GM12878 (cell line): ENCODE measurements at regions of chr1 and their contacts with region 1.

Region 1: DNA sequence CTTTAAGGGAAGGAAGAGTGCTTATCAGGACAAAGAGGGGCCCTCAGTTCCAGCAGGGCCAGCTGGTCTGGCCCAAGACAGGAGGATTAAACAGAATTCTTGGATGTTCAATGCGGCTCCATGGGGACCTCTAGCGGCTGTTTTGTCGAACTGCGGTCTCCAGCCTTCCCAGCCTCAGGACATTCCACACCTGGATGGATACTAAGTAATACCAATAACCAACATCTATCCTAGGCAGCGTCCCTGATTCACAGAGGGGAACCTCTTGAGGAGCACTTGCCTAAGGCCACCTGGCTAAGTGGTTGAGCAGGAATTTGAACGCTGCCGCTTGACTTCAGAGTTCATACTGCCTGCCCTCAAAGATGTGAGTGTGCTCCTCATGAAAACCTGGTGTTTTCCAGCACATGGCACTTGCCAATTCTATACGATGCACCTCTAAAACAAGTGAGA is 15.5 kb upstream of the CD247 start:
- DNase-seq: no peak
- ATAC-seq: peak; percentile 90
- H3K4me3 ChIP-seq: no peak overlapping the region
- H3K27ac ChIP-seq: no peak overlapping the region
- H3K4me1 ChIP-seq: peaks cover 4% of the 10 kb centered on the region
- H3K27me3 ChIP-seq: no peaks in the 10 kb centered on the region
- CTCF ChIP-seq: peak; percentile 82 to 87 (median 85)
- EP300 ChIP-seq: no peak
- POLR2A ChIP-seq: no peak
- RAD21 ChIP-seq: peak; percentile 85

Region 2: GRCh38 chr1:167059045-167059808 is 474.6 kb before region 1 on chr1:
- CTCF ChIA-PET with region 1: interaction called, 10 read pairs
- POLR2A ChIA-PET with region 1: no interaction called
- RAD21 ChIA-PET with region 1: interaction called, 5 read pairs
- SMC1A ChIA-PET with region 1: interaction called, 5 read pairs
- in situ Hi-C with region 1: no loop called
- intact Hi-C with region 1: no loop called
- DNase-seq: no peak
- ATAC-seq: peak; percentile 75
- H3K4me3 ChIP-seq: no peak overlapping the region
- H3K27ac ChIP-seq: no peak overlapping the region
- H3K4me1 ChIP-seq: 0 out of 2 replicates have a peak, but pooled peaks cover 3% of the 10 kb centered on the region
- H3K27me3 ChIP-seq: no peaks in the 10 kb centered on the region
- CTCF ChIP-seq: peak; percentile 87 to 90 (median 88)
- EP300 ChIP-seq: no peak
- POLR2A ChIP-seq: no peak
- RAD21 ChIP-seq: peak; percentile 85

Region 3: GRCh38 chr1:167401260-167401873 is 132.5 kb before region 1 on chr1:
- CTCF ChIA-PET with region 1: interaction called, 35 read pairs
- POLR2A ChIA-PET with region 1: no interaction called
- RAD21 ChIA-PET with region 1: interaction called, 7 read pairs
- SMC1A ChIA-PET with region 1: interaction called, 29 read pairs
- in situ Hi-C with region 1: no loop called
- intact Hi-C with region 1: loop called (anchors 2 kb)
- DNase-seq: peak; percentile 11
- ATAC-seq: peak; percentile 93
- H3K4me3 ChIP-seq: no peak overlapping the region
- H3K27ac ChIP-seq: no peak overlapping the region
- H3K4me1 ChIP-seq: no peaks in the 10 kb centered on the region
- H3K27me3 ChIP-seq: no peaks in the 10 kb centered on the region
- CTCF ChIP-seq: peak; percentile 45 to 76 (median 52); a peak in 5 of 6 replicates
- EP300 ChIP-seq: no peak
- POLR2A ChIP-seq: no peak
- RAD21 ChIP-seq: peak; percentile 73

Region 4: DNA sequence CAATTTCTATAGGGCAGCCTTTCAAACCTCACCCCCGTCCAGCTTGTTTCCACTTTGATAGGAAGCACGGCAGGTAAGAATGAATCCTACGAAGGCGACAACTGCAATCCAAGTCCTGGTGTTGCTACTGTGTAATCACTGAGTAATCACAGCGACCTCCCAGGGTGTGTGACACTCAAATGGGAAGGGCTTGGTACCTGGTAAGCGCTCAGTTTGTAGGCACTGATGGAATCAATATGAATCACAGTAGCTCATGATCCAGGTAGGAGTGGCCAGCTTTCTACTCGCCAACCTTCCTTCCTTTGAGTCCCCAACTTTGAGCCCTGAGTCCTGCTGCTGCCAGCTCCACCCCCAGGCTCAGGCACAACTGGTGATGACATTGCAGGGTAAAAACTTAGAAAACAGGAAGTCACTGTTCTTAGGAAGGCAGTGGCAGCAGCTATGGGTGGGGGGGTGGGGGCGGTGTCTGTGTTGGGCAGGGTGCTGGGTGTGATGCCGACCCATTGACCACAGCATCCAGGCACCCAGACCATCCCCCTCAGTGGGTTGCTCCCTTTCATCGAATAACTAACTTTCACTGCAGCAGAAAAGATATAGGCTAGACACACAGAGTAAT is 86.2 kb before region 1 on chr1:
- CTCF ChIA-PET with region 1: interaction called, 29 read pairs
- POLR2A ChIA-PET with region 1: no interaction called
- RAD21 ChIA-PET with region 1: interaction called, 35 read pairs
- SMC1A ChIA-PET with region 1: interaction called, 26 read pairs
- in situ Hi-C with region 1: no loop called
- intact Hi-C with region 1: loop called (anchors 1 kb)
- DNase-seq: no peak
- ATAC-seq: peak; percentile 89
- H3K4me3 ChIP-seq: no peak overlapping the region
- H3K27ac ChIP-seq: no peak overlapping the region
- H3K4me1 ChIP-seq: peaks cover 10% of the 10 kb centered on the region
- H3K27me3 ChIP-seq: no peaks in the 10 kb centered on the region
- CTCF ChIP-seq: no peak
- EP300 ChIP-seq: no peak
- POLR2A ChIP-seq: no peak
- RAD21 ChIP-seq: no peak

Region 5: DNA sequence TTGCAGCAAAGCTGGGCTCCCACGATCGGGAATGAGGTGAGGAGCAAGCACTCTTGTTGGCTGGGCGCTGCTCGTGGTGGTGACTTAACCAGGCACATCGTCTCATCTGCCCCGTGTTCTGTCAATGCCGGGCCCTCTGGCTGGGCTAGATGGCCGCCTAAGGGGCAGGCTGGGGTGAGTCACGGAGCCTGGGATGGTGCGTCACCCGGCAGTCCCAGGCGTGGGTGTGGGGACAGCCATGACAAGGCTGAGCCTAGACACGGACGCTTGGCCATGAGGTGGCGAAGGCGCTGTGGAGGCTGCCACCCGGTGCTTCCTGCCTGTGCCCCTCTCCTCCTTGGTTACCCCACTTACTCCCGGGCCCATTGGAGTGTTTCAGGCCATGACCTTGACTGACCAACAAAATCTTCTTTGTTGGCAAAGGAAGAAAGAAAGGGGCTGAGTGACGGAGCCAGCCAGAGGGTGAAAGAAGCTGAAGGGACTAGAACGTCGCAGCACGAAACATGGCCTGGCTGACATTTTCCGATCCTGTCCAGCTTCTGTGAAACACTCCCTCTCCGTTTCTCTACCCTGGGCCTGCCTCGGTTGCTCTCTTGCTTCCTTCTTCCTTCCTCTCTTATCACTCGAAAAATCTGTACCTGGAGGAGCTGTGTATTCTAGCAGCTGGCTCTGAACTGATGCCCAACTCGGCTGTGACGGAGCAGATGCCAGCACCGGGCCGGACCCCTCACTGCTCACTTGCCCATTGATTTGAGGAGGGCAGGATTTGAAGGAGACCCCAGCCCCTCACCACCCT is 16.1 kb before region 1 on chr1:
- CTCF ChIA-PET with region 1: interaction called, 35 read pairs
- POLR2A ChIA-PET with region 1: no interaction called
- RAD21 ChIA-PET with region 1: no interaction called
- SMC1A ChIA-PET with region 1: interaction called, 6 read pairs
- in situ Hi-C with region 1: no loop called
- intact Hi-C with region 1: no loop called
- DNase-seq: no peak
- ATAC-seq: no peak
- H3K4me3 ChIP-seq: no peak overlapping the region
- H3K27ac ChIP-seq: no peak overlapping the region
- H3K4me1 ChIP-seq: no peaks in the 10 kb centered on the region
- H3K27me3 ChIP-seq: peaks cover 0 to 3% of the 10 kb centered on the region in 2 experiments; a peak in 2 of 4 replicates
- CTCF ChIP-seq: no peak
- EP300 ChIP-seq: no peak
- POLR2A ChIP-seq: no peak
- RAD21 ChIP-seq: no peak